GM12878 (cell line): ENCODE measurements at regions of chr3 and their contacts with region 1.

Region 1: GRCh38 chr3:196711838-196712513 is at the starts of genes CEP19 and PIGX:
- DNase-seq: peak; percentile 67
- ATAC-seq: peak; percentile 88
- H3K4me3 ChIP-seq: peak within 1 kb of the TSS; percentile 89
- H3K27ac ChIP-seq: peak within 1 kb of the TSS; percentile 89
- H3K4me1 ChIP-seq: no peaks in the 10 kb centered on the region
- H3K27me3 ChIP-seq: no peaks in the 10 kb centered on the region
- CTCF ChIP-seq: no peak
- EP300 ChIP-seq: peak; percentile 53 to 59; a peak in 2 of 4 replicates
- POLR2A ChIP-seq: peak; percentile 84
- RAD21 ChIP-seq: no peak
- polyA plus RNA-seq, gene CEP19: 2.4 to 2.8 TPM
- polyA plus RNA-seq, gene PIGX: 3.8 to 9.7 TPM

Region 2: GRCh38 chr3:196739671-196740480 is 27.9 kb after region 1 on chr3 and contains the start of gene PAK2:
- CTCF ChIA-PET with region 1: no interaction called
- POLR2A ChIA-PET with region 1: interaction called, 6 read pairs
- RAD21 ChIA-PET with region 1: interaction called, 7 read pairs
- SMC1A ChIA-PET with region 1: interaction called, 14 read pairs
- in situ Hi-C with region 1: no loop called
- intact Hi-C with region 1: loop called (anchors 5 kb)
- DNase-seq: peak; percentile 46
- ATAC-seq: peak; percentile 93
- H3K4me3 ChIP-seq: peak within 1 kb of the TSS; percentile 95
- H3K27ac ChIP-seq: peak within 1 kb of the TSS; percentile 92
- H3K4me1 ChIP-seq: no peaks in the 10 kb centered on the region
- H3K27me3 ChIP-seq: no peaks in the 10 kb centered on the region
- CTCF ChIP-seq: no peak
- EP300 ChIP-seq: no peak
- POLR2A ChIP-seq: peak; percentile 90
- RAD21 ChIP-seq: no peak
- polyA plus RNA-seq, gene PAK2: 9.0 to 11.7 TPM

Region 3: GRCh38 chr3:196749125-196749524 is 37.1 kb after region 1 on chr3:
- CTCF ChIA-PET with region 1: interaction called, 3 read pairs
- POLR2A ChIA-PET with region 1: interaction called, 3 read pairs
- RAD21 ChIA-PET with region 1: interaction called, 3 read pairs
- SMC1A ChIA-PET with region 1: interaction called, 14 read pairs
- in situ Hi-C with region 1: no loop called
- intact Hi-C with region 1: loop called (anchors 5 kb)
- DNase-seq: no peak
- ATAC-seq: peak; percentile 78
- H3K4me3 ChIP-seq: no peak overlapping the region
- H3K27ac ChIP-seq: no peak overlapping the region
- H3K4me1 ChIP-seq: no peaks in the 10 kb centered on the region
- H3K27me3 ChIP-seq: no peaks in the 10 kb centered on the region
- CTCF ChIP-seq: no peak
- EP300 ChIP-seq: no peak
- POLR2A ChIP-seq: no peak
- RAD21 ChIP-seq: no peak